ENCODE measurements at regions of chr9 and their contacts with region 1.

Region 1: DNA sequence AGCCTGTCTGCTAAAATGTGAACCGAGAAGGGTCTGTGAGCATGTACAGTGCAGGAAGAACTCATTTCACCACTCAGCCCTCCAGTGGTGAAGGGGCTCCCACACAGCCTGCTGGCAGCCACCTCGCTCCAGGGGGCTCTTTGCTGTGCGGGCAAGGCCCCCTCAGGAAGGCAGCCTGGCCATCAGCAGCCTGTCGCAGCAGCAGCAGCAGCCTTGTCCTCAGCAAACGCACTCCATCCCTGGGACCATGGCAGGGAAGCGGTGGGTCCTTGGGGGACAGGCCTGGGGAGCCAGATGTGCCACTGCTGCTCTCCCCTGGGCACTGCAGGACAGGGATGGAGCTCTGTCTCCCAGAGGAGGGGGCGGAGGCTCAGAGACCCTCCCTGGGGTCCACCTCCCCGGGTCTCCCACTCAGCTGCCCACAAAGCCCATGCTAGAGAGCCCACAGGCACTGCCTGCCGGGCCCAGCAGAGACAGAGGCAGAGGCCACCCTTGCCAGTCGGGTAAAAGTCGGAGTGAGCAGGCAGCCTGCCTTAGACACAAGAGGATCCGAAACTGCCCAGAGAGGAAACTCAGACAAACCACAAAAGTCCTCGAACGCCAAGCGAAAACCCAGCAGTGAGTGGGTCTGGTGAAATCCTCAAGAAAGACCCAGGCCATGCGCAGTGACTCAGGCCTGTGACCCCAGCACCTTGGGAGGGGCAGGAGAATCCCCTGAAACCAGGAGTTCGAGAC is 8.0 kb downstream of the BRD3 start:
- DNase-seq: peak; percentile 26 to 39
- H3K4me3 ChIP-seq: no peak overlapping the region
- H3K27ac ChIP-seq: no peak overlapping the region
- H3K4me1 ChIP-seq: peaks cover 73 to 99% (median 97%) of the 10 kb centered on the region in 4 donors
- H3K27me3 ChIP-seq: no peaks in the 10 kb centered on the region
- CTCF ChIP-seq: no peak
- EP300 ChIP-seq: no peak
- POLR2A ChIP-seq: no peak

Region 2: DNA sequence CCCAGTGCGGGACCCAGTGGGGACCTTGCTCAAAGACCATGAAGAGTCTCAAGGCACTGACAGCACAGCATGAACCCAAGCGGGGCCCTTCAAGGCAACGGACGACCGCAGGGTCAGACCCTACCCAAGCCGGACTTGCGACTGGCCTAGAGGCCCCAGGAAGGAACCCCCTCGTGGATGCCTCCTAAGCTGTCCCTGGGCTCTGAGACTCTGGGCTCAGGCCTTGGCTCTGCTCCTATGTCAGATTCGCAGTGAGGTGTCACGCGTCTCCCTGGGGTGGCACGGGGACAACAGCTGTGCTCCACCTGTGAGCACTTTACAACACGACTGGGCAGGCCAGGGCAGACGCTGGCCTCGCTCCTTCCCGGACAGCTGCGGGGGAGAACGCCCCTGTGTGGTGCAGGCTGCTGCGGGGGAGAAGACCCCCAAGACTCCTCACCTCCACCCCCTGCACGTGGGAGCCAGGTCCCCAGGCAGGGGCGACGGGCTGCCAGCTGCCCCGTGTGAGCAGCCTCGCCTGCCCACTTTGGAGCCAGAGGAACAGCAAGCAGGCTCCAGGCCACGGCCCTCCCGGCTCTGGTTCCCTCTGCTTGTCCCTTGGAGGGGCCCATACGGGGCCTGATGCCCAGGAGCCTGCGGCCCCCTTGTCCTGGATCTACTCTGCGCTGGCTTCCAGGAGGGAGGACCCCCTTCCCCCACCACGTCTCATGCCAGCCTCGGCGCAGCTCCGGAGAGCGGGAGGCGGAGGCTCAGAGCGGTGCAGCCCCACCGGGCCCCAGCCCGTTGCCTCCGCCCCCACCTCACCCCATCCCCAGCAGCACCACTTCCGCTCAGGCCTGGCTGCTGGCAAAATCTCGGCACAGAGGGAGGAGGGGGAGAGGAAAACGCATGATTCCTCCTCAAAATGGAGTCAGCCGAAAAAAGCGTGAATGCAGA is 357.7 kb before region 1 on chr9:
- intact Hi-C with region 1: no loop called
- DNase-seq: peak in 1 of 2 donors; percentile 86
- H3K4me3 ChIP-seq: peak overlapping the region; percentile 19 to 36 (median 34)
- H3K27ac ChIP-seq: peak overlapping the region in 4 of 5 donors; percentile 2 to 61 (median 23)
- H3K4me1 ChIP-seq: peaks cover 0 to 18% (median 14%) of the 10 kb centered on the region in 4 donors
- H3K27me3 ChIP-seq: peaks cover 0 to 27% (median 0%) of the 10 kb centered on the region in 3 donors
- CTCF ChIP-seq: no peak
- EP300 ChIP-seq: no peak
- POLR2A ChIP-seq: no peak

Region 3: GRCh38 chr9:134024828-134025605 is 34.8 kb before region 1 on chr9 and contains the start of gene BRD3OS:
- intact Hi-C with region 1: loop called (anchors 5 kb)
- DNase-seq: peak; percentile 96 to 99
- H3K4me3 ChIP-seq: peak within 1 kb of the TSS; percentile 70 to 100 (median 95)
- H3K27ac ChIP-seq: peak within 1 kb of the TSS in 4 of 5 donors; percentile 59 to 86 (median 74)
- H3K4me1 ChIP-seq: peaks cover 8 to 22% (median 15%) of the 10 kb centered on the region in 4 donors
- H3K27me3 ChIP-seq: no peaks in the 10 kb centered on the region
- CTCF ChIP-seq: no peak
- EP300 ChIP-seq: no peak
- POLR2A ChIP-seq: no peak
- total RNA-seq, gene BRD3OS: 2.4 to 12.0 (median 4.4) TPM in 4 of 5 donors, not detected in the other

Region 4: GRCh38 chr9:134111064-134111463 is 51.2 kb after region 1 on chr9:
- intact Hi-C with region 1: no loop called
- DNase-seq: no peak
- H3K4me3 ChIP-seq: no peak overlapping the region
- H3K27ac ChIP-seq: no peak overlapping the region
- H3K4me1 ChIP-seq: no peaks in the 10 kb centered on the region
- H3K27me3 ChIP-seq: peaks cover 0 to 5% (median 0%) of the 10 kb centered on the region in 3 donors
- CTCF ChIP-seq: no peak
- EP300 ChIP-seq: no peak
- POLR2A ChIP-seq: no peak